Activated CD8-positive, alpha-beta memory T cell treated with anti-CD3 and anti-CD28 coated beads, Interleukin-2, amount 10 ng/mL, durations not matched to agents 7 days and 5 days (primary cell): ENCODE measurements at regions of chr1 and their contacts with region 1.

Region 1: GRCh38 chr1:34865981-34866761 is 6.6 kb upstream of the SMIM12 start:
- DNase-seq: peak; percentile 91
- ATAC-seq: peak; percentile 79
- H3K4me3 Mint-ChIP-seq: peak overlapping the region; percentile 73
- H3K27ac Mint-ChIP-seq: peak overlapping the region; percentile 83
- H3K4me1 Mint-ChIP-seq: peaks cover 33% of the 10 kb centered on the region
- H3K27me3 Mint-ChIP-seq: peaks cover 3% of the 10 kb centered on the region

Region 2: GRCh38 chr1:34786521-34787325 is 79.4 kb before region 1 on chr1:
- CTCF ChIA-PET with region 1: interaction called, 10 read pairs
- DNase-seq: peak; percentile 76
- ATAC-seq: peak; percentile 85
- H3K4me3 Mint-ChIP-seq: no peak overlapping the region
- H3K27ac Mint-ChIP-seq: no peak overlapping the region
- H3K4me1 Mint-ChIP-seq: peaks cover 6% of the 10 kb centered on the region
- H3K27me3 Mint-ChIP-seq: peaks cover 22% of the 10 kb centered on the region

Region 3: GRCh38 chr1:34852677-34853217 is 13.4 kb before region 1 on chr1:
- CTCF ChIA-PET with region 1: interaction called, 149 read pairs
- DNase-seq: peak; percentile 95
- ATAC-seq: peak; percentile 100
- H3K4me3 Mint-ChIP-seq: no peak overlapping the region
- H3K27ac Mint-ChIP-seq: peak overlapping the region; percentile 47
- H3K4me1 Mint-ChIP-seq: peaks cover 23% of the 10 kb centered on the region
- H3K27me3 Mint-ChIP-seq: no peaks in the 10 kb centered on the region

Region 4: DNA sequence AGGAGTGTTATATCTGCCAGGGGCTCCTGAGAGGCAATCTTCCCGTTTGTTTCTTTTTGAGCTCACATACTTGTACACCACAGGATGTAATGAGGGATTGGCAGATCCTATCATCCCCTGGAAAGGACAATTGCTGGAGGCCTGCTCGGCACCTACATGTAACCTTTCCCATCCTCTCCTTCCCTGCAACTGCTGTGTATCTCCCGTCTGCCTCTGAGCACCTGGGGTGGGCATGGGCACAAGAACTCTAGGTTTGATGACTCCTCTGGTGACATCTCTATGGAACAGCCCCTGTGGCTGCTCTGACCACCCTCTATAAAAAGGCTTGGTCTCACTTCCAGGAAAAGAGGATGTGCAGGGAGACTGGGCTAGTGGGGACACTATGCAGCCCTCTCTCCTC is 18.4 kb after region 1 on chr1:
- CTCF ChIA-PET with region 1: interaction called, 16 read pairs
- DNase-seq: peak; percentile 28
- ATAC-seq: no peak
- H3K4me3 Mint-ChIP-seq: no peak overlapping the region
- H3K27ac Mint-ChIP-seq: no peak overlapping the region
- H3K4me1 Mint-ChIP-seq: peaks cover 5% of the 10 kb centered on the region
- H3K27me3 Mint-ChIP-seq: peaks cover 56% of the 10 kb centered on the region

Region 5: GRCh38 chr1:35016406-35016805 is 150.2 kb after region 1 on chr1:
- CTCF ChIA-PET with region 1: no interaction called
- DNase-seq: no peak
- ATAC-seq: no peak
- H3K4me3 Mint-ChIP-seq: no peak overlapping the region
- H3K27ac Mint-ChIP-seq: no peak overlapping the region
- H3K4me1 Mint-ChIP-seq: peaks cover 1% of the 10 kb centered on the region
- H3K27me3 Mint-ChIP-seq: no peaks in the 10 kb centered on the region